CD8-positive, alpha-beta T cell (primary cell): ENCODE measurements at regions of chr3 and their contacts with region 1.

Region 1: GRCh38 chr3:156816800-156817645 is 9.1 kb upstream of the LEKR1 start:
- DNase-seq: peak; percentile 53 to 95 (median 85)
- ATAC-seq: peak; percentile 80
- H3K4me3 ChIP-seq: peak overlapping the region; percentile 75 to 88
- H3K4me3 Mint-ChIP-seq: peak overlapping the region; percentile 95
- H3K27ac ChIP-seq: peak overlapping the region; percentile 73 to 78
- H3K27ac Mint-ChIP-seq: peak overlapping the region; percentile 95
- H3K4me1 ChIP-seq: peaks cover 18% of the 10 kb centered on the region
- H3K4me1 Mint-ChIP-seq: peaks cover 38% of the 10 kb centered on the region
- H3K27me3 ChIP-seq: no peaks in the 10 kb centered on the region
- H3K27me3 Mint-ChIP-seq: no peaks in the 10 kb centered on the region
- CTCF ChIP-seq: no peak

Region 2: GRCh38 chr3:155859859-155860258 is 957.2 kb before region 1 on chr3:
- CTCF ChIA-PET with region 1: no interaction called
- POLR2A ChIA-PET with region 1: no interaction called
- intact Hi-C with region 1: loop called in 1 of 2 experiments (anchors 10 kb)
- DNase-seq: peak in 2 of 9 experiments; percentile 33 to 43
- ATAC-seq: no peak
- H3K4me3 ChIP-seq: no peak overlapping the region
- H3K4me3 Mint-ChIP-seq: no peak overlapping the region
- H3K27ac ChIP-seq: no peak overlapping the region
- H3K27ac Mint-ChIP-seq: no peak overlapping the region
- H3K4me1 ChIP-seq: peaks cover 9% of the 10 kb centered on the region
- H3K4me1 Mint-ChIP-seq: peaks cover 13% of the 10 kb centered on the region
- H3K27me3 ChIP-seq: no peaks in the 10 kb centered on the region
- H3K27me3 Mint-ChIP-seq: no peaks in the 10 kb centered on the region
- CTCF ChIP-seq: no peak